Dendritic cell treated with granulocyte-macrophage colony-stimulating factor and Interleukin-4, amounts not matched to agents 40 ng/mL and 50 ng/mL, for 4 days (primary cell): ENCODE measurements at regions of chr5 and their contacts with region 1.

Region 1: DNA sequence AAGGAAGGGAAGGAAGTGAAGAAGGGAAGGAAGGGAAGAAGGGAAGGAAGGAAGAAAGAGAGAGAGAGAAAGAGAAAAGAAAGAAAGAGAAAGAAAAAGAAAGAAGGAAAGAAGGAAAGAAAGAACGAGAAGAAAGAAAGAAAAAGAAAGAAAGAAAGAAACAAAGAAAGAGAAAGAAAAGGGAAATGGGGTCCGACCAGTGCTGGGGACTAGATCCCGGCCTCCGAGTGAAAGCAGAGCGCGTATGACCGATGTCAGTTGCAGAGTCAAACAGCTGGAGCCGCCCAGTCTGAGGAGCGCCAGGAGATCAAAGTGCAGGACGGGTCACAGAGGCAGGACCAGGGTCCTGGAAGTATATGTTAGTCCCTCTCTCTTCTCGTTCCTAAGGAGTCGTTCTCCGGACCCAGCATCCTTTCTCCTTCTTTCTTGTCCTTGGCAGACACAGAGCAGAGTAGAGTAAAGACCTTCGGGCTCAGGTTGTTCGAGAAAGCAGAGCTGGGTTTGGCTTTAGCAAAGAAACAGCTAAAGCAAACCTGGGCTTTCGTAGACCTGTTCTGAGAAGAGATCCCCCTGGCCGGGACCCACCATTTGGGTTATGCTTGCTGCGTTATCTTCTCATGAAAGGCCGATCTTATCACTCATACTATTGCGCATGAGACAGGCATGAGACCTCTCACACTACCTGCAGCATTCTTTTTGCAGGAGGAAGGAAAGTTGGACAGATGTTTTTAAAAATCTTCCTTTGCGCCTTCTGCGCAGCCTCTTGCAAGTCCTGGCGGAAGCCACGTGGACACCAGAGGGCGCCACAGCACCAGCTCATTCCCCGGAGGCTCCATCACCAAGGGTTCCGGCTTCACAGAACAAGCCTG is 305.2 kb upstream of the MSX2 start:
- H3K4me3 Mint-ChIP-seq: no peak overlapping the region
- H3K27ac Mint-ChIP-seq: no peak overlapping the region
- H3K4me1 Mint-ChIP-seq: peaks cover 8% of the 10 kb centered on the region
- H3K27me3 Mint-ChIP-seq: peaks cover 18% of the 10 kb centered on the region

Region 2: DNA sequence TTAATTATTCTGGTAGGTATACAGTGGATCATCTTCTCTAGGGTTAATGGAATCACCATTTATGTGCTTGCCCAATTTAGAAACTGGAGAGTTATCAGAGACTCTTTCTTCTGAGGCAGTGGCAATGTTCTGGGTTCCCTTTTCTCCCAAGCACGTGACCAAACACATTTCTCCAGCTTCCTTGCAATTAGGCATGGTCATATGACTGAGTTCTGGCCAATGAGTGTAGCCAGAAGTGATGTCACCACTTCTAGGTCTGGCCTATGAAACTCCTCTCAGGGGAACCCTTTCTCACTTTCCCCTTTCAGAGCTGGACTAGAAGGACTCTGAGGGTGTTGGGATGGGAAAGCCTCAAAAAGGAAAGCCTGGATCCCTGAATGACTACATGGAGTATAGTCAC is 201.6 kb before region 1 on chr5:
- intact Hi-C with region 1: no loop called
- H3K4me3 Mint-ChIP-seq: no peak overlapping the region
- H3K27ac Mint-ChIP-seq: no peak overlapping the region
- H3K4me1 Mint-ChIP-seq: no peaks in the 10 kb centered on the region
- H3K27me3 Mint-ChIP-seq: no peaks in the 10 kb centered on the region

Region 3: DNA sequence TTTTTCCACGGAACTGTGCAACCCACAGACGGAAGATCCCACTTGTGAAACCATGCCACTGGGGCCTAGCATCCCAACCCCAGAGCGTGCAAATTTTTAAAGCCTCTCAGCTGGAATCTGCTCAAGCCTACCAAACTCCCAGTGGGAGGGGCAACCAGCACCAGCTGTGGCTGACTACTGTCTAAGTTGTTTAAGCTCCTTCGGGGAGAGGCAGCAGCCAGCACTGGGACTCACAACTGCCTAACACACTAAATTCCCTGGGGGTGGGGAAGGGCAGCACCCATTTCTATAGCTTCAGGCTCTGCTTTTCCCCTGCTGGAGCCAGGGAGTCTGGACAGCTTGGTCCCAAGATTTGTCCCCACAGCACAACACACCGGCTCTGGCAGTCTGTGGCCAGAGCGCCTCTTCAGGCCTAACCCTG is 17.6 kb after region 1 on chr5:
- intact Hi-C with region 1: no loop called
- H3K4me3 Mint-ChIP-seq: no peak overlapping the region
- H3K27ac Mint-ChIP-seq: no peak overlapping the region
- H3K4me1 Mint-ChIP-seq: no peaks in the 10 kb centered on the region
- H3K27me3 Mint-ChIP-seq: peaks cover 3% of the 10 kb centered on the region

Region 4: DNA sequence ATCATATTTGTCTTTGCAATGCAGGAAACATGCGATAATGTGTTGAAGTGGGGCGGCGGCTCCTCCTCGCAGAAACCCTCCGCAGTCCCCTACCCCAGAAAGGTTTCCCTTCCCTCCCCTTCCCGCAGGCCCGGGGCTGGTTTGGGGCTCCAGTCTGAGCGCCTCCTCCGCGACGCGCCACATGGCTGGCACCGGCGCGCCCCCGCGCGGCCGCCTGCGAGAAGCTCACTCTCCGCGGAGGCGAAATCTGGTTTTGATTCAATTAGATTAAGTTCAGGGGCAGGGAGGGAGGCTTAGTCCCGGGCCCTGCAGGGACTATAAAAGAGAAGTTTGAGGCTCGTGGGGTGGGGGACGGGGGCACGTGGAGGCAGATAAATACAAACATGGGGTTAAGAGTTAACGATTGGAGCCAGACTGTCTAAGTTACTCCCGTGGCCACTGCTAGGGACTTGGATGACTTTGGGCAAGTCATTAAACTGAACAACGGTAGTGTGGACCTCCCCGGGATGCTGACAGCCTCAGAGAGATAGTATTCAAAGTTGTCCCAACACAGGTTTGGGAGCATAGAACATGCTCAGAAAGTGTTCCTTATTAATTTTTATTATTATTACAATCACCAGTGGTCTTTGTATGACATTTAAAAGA is 374.6 kb after region 1 on chr5:
- intact Hi-C with region 1: loop called (anchors 1 kb)
- H3K4me3 Mint-ChIP-seq: no peak overlapping the region
- H3K27ac Mint-ChIP-seq: no peak overlapping the region
- H3K4me1 Mint-ChIP-seq: no peaks in the 10 kb centered on the region
- H3K27me3 Mint-ChIP-seq: peaks cover 28% of the 10 kb centered on the region

Region 5: GRCh38 chr5:174935854-174936474 is 516.8 kb after region 1 on chr5:
- intact Hi-C with region 1: loop called (anchors 2 kb)
- H3K4me3 Mint-ChIP-seq: no peak overlapping the region
- H3K27ac Mint-ChIP-seq: no peak overlapping the region
- H3K4me1 Mint-ChIP-seq: no peaks in the 10 kb centered on the region
- H3K27me3 Mint-ChIP-seq: peaks cover 4% of the 10 kb centered on the region